Activated naive CD4-positive, alpha-beta T cell treated with anti-CD3 and anti-CD28 coated beads for 36 hours (primary cell): ENCODE measurements at regions of chr1 and their contacts with region 1.

Region 1: GRCh38 chr1:46527474-46528296 is 23.8 kb downstream of the KNCN start:
- DNase-seq: peak; percentile 88
- H3K4me3 Mint-ChIP-seq: no peak overlapping the region
- H3K27ac Mint-ChIP-seq: no peak overlapping the region
- H3K4me1 Mint-ChIP-seq: peaks cover 17% of the 10 kb centered on the region
- H3K27me3 Mint-ChIP-seq: peaks cover 31% of the 10 kb centered on the region

Region 2: DNA sequence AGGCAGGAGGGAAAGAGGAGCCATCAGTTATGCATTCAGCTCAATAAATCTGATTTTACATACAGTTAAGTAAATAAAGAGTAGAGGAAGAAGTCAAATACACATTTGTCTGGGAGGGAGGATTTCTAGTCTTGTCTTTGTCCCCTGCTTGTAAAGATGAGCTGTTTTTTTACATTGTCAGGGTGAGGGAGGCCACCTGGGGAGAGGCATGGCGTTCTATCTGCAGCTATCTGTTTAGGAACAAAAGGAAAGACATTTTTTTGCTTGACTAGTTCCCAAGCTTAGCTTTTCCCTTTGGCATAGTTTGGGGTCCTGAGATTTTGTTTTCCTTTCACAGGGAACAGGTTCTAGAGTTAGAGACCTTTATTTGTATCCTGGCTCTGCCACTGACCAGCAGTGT is 265.2 kb before region 1 on chr1:
- CTCF ChIA-PET with region 1: no interaction called
- intact Hi-C with region 1: no loop called
- DNase-seq: no peak
- H3K4me3 Mint-ChIP-seq: no peak overlapping the region
- H3K27ac Mint-ChIP-seq: no peak overlapping the region
- H3K4me1 Mint-ChIP-seq: no peaks in the 10 kb centered on the region
- H3K27me3 Mint-ChIP-seq: no peaks in the 10 kb centered on the region

Region 3: DNA sequence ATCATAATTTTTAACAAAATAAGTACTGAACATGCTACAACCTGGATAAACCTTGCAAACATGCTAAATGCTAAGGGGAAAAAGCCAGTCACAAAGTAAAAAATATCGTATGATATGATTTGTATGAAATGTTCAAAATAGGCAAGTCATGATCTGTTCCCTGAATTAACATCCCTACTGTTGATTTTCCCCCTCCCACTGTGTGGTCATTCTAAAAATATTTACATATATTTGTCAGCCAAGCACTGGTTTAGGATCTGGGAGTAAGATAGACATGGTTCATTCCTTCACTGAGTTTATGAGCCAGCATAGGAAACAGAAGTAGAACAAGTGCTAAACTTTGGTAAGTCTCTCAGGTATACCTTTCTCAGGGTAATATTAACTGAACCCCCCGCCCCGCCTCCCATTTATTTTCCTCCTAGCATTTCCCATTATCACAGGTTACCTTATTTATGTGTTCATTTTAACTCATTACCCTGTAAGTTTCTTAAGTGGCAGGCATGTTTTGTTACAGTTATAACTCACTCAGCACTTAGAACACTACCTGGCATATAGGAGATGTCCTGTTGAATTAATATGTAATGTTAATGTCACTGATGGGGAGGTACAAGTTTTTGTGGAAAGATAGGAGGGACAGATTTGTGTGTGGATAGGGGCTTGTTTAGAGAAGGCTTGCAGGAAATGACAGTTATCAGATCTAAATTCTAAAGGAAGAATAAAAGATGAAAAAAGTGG is 211.8 kb before region 1 on chr1:
- CTCF ChIA-PET with region 1: no interaction called
- intact Hi-C with region 1: no loop called
- DNase-seq: no peak
- H3K4me3 Mint-ChIP-seq: no peak overlapping the region
- H3K27ac Mint-ChIP-seq: no peak overlapping the region
- H3K4me1 Mint-ChIP-seq: no peaks in the 10 kb centered on the region
- H3K27me3 Mint-ChIP-seq: no peaks in the 10 kb centered on the region

Region 4: GRCh38 chr1:46406881-46407608 is 120.6 kb before region 1 on chr1:
- CTCF ChIA-PET with region 1: interaction called, 5 read pairs
- intact Hi-C with region 1: loop called (anchors 1 kb)
- DNase-seq: no peak
- H3K4me3 Mint-ChIP-seq: no peak overlapping the region
- H3K27ac Mint-ChIP-seq: no peak overlapping the region
- H3K4me1 Mint-ChIP-seq: no peaks in the 10 kb centered on the region
- H3K27me3 Mint-ChIP-seq: no peaks in the 10 kb centered on the region

Region 5: DNA sequence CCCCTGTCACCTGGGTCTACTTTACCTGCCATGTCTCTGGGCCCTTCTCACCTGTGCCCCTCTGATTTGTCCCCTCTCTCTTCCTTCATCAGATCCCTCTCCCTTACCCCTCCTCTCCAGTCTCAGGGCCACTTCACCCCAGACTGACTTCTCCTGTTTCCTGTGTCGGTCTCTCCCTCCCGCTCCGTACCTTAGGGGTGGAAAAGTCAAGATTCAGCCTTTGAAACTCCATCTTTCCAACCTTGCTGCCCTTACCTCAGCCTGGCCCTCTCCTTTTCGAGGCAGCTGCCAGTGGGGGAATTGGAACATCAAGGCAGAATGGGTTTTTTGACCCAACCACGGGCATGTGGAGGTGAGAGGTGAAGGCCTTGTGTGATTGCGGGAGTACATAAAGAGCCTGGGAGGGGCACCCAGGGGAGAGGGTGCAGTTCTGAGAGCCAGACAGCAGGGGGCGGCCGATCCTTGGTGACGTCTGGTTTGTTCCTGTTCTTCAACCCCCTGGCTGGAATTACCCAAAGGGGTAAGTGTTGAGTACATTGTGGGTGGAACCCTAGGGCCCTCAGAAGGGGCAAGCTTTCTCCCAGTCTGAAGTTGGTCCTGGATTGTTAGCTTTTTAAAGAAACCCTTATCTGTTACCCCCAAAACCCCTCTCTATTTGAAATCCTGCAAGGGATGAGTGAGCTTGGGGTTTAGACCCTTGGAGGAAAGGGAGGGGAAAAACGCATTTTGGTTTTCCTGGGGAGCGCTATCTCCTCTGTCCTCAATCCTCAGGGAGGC is 50.3 kb before region 1 on chr1:
- CTCF ChIA-PET with region 1: interaction called, 98 read pairs
- intact Hi-C with region 1: loop called (anchors 1 kb)
- DNase-seq: peak; percentile 88
- H3K4me3 Mint-ChIP-seq: no peak overlapping the region
- H3K27ac Mint-ChIP-seq: no peak overlapping the region
- H3K4me1 Mint-ChIP-seq: no peaks in the 10 kb centered on the region
- H3K27me3 Mint-ChIP-seq: peaks cover 24% of the 10 kb centered on the region

Region 6: GRCh38 chr1:46547481-46548383 is 20.0 kb after region 1 on chr1:
- CTCF ChIA-PET with region 1: no interaction called
- intact Hi-C with region 1: loop called (anchors 2 kb)
- DNase-seq: peak; percentile 18
- H3K4me3 Mint-ChIP-seq: no peak overlapping the region
- H3K27ac Mint-ChIP-seq: no peak overlapping the region
- H3K4me1 Mint-ChIP-seq: no peaks in the 10 kb centered on the region
- H3K27me3 Mint-ChIP-seq: peaks cover 41% of the 10 kb centered on the region

Region 7: GRCh38 chr1:46724991-46725735 is 197.5 kb after region 1 on chr1:
- CTCF ChIA-PET with region 1: interaction called, 8 read pairs
- intact Hi-C with region 1: loop called (anchors 1 kb)
- DNase-seq: peak; percentile 83
- H3K4me3 Mint-ChIP-seq: no peak overlapping the region
- H3K27ac Mint-ChIP-seq: no peak overlapping the region
- H3K4me1 Mint-ChIP-seq: no peaks in the 10 kb centered on the region
- H3K27me3 Mint-ChIP-seq: peaks cover 23% of the 10 kb centered on the region